Motor neuron (in vitro differentiated cells): ENCODE measurements at regions of chr12 and their contacts with region 1.

Region 1: DNA sequence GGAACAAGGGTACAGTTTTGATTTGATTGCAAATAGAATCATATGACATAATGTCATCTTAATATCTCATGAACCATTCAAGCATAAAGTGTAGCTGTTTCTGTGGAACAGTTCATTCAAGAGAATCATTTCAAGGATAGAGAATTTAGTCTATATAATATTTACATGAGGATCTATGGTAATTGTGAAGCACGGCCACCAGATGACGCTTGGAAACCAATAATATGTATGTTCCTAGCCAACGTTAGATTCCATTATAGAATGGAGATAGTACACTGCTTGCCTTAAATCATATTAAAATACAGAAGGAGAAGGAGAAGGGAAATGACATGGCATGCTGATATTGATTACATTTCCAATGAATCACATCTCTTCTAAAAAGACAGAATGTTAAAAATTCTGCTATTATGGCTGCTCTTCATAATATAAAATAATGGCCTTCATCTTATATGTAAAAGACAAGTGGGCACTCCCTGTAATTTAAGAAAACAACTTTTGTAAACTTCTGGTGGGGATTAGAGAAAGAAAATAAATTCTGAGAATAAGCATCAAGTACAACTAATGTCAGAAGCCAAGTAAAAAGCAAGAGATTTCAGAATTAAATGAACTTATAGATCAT is 351.0 kb downstream of the NAV3 start:
- ATAC-seq: peak in 5 of 8 experiments; percentile 28 to 82 (median 55)
- H3K4me3 ChIP-seq: no peak overlapping the region
- H3K27ac ChIP-seq: no peak overlapping the region
- H3K4me1 ChIP-seq: no peaks in the 10 kb centered on the region

Region 2: DNA sequence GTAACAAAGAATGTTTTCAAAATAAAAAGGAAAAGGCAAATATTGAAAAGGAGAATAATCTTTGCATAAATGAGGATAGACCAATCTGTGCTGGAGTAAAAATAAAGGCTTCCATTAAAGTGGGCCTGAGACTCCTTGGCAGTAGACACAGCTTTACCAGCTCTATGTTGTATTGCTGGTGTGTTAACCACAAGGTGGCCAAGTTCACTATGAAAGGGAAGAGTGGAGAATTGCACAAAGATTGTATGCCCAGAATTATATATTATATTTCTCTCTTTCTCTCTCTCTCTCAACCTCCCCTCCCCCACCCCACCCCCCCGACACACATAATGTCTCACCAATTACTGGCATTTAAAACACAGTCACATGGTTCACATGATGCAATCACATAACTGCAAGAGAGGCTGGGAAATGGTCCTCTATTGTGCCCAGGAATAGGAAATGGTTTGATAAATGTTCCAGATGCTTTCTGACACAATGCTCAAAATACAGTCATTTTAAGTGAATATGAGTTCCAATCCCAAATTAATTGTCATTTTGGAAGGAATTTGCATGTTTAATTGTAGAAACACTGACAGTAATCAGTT is 460.3 kb after region 1 on chr12:
- in situ Hi-C with region 1: no loop called
- ATAC-seq: peak in 2 of 8 experiments; percentile 26 to 53
- H3K4me3 ChIP-seq: no peak overlapping the region
- H3K27ac ChIP-seq: no peak overlapping the region
- H3K4me1 ChIP-seq: peaks cover 4 to 6% of the 10 kb centered on the region in 2 donors

Region 3: DNA sequence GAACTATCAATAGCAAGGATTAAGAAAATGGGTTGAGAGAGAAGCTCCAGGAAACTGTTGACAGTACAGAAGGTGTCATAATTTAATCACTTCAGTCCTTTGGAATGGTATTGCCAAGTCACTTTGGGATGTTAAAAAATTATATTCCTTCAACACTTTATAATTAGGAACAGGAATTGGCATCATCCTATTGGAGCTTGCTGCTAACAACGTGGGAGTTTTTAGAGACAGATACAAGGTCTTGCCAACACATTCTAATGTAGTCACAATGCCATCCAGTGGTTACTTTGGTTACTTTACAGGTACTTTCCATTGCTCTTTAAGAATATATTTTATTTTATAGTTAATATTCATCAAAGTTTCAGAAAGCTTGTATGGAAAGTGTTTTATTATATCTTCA is 993.0 kb after region 1 on chr12:
- in situ Hi-C with region 1: loop called in 1 of 9 experiments (anchors 25 kb)
- ATAC-seq: peak in 3 of 8 experiments; percentile 54 to 78 (median 55)
- H3K4me3 ChIP-seq: no peak overlapping the region
- H3K27ac ChIP-seq: no peak overlapping the region
- H3K4me1 ChIP-seq: no peaks in the 10 kb centered on the region